Activated CD4-positive, alpha-beta T cell treated with anti-CD3 and anti-CD28 coated beads for 36 hours (primary cell): ENCODE measurements at regions of chr16 and their contacts with region 1.

Region 1: DNA sequence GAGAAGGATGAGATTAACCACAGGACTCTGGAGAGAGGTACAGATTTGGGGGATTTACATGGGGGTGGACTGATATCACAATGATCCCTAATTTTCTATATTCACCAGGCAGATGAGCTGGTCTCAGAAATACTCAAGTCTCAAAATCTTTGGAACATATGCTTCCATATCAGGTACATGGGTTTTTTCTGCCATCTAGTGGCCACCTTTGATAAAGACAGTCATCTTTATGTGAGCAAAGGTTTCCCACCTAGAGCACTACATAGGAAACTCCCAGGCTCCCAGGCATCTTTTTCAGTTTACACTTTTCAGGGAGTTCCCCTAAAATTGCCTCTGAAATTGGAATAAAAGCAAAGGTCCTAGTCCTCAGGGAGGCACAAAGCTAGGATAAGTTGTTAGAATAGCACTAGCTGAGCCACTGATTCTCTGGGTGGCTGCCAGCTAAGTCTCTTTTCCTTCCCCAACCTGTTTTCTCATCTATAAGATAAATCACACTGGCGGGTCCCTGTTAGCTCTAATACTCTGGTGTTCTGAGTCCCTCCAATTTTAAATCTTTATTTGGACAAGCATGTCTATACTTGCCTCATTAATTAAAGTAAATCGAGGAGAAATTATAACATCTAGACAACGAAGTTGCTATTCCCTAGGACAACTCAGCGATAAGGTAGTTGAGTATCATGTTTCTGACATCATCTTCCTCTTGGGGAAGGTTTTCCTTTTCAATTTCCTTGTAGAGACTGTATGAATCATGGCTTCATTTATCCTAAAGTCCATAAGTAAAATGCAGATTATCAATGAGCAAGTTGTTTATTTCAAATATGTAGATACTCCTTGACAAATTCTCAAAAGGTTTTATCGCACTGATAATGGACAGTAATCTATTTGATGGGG is 19.0 kb upstream of the MON1B start:
- DNase-seq: peak; percentile 27
- ATAC-seq: peak; percentile 57
- H3K4me3 Mint-ChIP-seq: no peak overlapping the region
- H3K27ac Mint-ChIP-seq: no peak overlapping the region
- H3K4me1 Mint-ChIP-seq: no peaks in the 10 kb centered on the region
- H3K27me3 Mint-ChIP-seq: peaks cover 47% of the 10 kb centered on the region

Region 2: DNA sequence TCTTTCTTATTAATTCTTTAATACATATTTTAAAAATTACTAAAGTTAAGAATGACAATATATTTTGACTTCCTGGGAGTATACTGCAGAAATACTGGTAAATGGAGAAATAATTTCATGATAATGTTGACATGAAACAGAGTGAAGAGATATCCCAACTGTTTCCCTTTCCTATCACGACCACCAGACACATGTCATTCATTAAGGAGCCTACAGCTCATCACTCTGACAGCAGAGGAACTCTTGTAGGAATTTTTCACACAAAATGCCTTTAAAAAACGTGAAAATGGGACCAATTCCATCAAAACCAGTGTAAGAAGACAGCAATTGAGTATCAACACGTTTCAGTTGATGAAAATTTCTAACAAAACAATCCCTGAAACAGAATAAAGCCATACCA is 1272.8 kb before region 1 on chr16:
- CTCF ChIA-PET with region 1: no interaction called
- POLR2A ChIA-PET with region 1: no interaction called
- intact Hi-C with region 1: no loop called
- DNase-seq: no peak
- ATAC-seq: no peak
- H3K4me3 Mint-ChIP-seq: no peak overlapping the region
- H3K27ac Mint-ChIP-seq: no peak overlapping the region
- H3K4me1 Mint-ChIP-seq: no peaks in the 10 kb centered on the region
- H3K27me3 Mint-ChIP-seq: no peaks in the 10 kb centered on the region

Region 3: DNA sequence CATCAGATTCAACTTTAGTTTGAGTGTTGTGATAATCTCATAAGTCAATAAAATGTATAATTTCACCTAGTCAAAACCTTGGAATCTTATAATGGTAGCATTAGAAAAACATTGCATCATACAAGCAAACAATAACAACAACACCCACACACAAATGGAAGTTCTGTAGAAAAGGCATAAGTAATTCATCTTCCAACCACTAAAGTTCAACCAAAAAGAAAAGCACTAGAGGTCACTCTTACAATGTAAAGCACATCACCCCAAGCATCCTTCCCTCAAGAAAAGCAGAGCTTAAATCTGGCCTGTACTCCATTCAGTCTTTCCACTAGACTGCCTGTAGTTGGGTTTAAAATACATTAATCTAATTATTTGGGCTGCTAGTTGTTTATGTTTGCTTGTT is 893.0 kb before region 1 on chr16:
- CTCF ChIA-PET with region 1: interaction called, 4 read pairs
- POLR2A ChIA-PET with region 1: no interaction called
- intact Hi-C with region 1: loop called in 1 of 2 experiments (anchors 2 kb)
- DNase-seq: no peak
- ATAC-seq: no peak
- H3K4me3 Mint-ChIP-seq: no peak overlapping the region
- H3K27ac Mint-ChIP-seq: no peak overlapping the region
- H3K4me1 Mint-ChIP-seq: no peaks in the 10 kb centered on the region
- H3K27me3 Mint-ChIP-seq: peaks cover 2% of the 10 kb centered on the region

Region 4: GRCh38 chr16:76932541-76933211 is 239.3 kb before region 1 on chr16:
- CTCF ChIA-PET with region 1: no interaction called
- POLR2A ChIA-PET with region 1: no interaction called
- intact Hi-C with region 1: loop called in 1 of 2 experiments (anchors 1 kb)
- DNase-seq: no peak
- ATAC-seq: peak; percentile 85
- H3K4me3 Mint-ChIP-seq: no peak overlapping the region
- H3K27ac Mint-ChIP-seq: no peak overlapping the region
- H3K4me1 Mint-ChIP-seq: peaks cover 4% of the 10 kb centered on the region
- H3K27me3 Mint-ChIP-seq: peaks cover 10% of the 10 kb centered on the region

Region 5: GRCh38 chr16:77157346-77158058 is 14.5 kb before region 1 on chr16:
- CTCF ChIA-PET with region 1: interaction called, 16 read pairs
- POLR2A ChIA-PET with region 1: no interaction called
- intact Hi-C with region 1: no loop called
- DNase-seq: no peak
- ATAC-seq: no peak
- H3K4me3 Mint-ChIP-seq: no peak overlapping the region
- H3K27ac Mint-ChIP-seq: no peak overlapping the region
- H3K4me1 Mint-ChIP-seq: no peaks in the 10 kb centered on the region
- H3K27me3 Mint-ChIP-seq: peaks cover 12% of the 10 kb centered on the region